HEK293 (cell line): ENCODE measurements at regions of chr10 and their contacts with region 1.

Region 1: DNA sequence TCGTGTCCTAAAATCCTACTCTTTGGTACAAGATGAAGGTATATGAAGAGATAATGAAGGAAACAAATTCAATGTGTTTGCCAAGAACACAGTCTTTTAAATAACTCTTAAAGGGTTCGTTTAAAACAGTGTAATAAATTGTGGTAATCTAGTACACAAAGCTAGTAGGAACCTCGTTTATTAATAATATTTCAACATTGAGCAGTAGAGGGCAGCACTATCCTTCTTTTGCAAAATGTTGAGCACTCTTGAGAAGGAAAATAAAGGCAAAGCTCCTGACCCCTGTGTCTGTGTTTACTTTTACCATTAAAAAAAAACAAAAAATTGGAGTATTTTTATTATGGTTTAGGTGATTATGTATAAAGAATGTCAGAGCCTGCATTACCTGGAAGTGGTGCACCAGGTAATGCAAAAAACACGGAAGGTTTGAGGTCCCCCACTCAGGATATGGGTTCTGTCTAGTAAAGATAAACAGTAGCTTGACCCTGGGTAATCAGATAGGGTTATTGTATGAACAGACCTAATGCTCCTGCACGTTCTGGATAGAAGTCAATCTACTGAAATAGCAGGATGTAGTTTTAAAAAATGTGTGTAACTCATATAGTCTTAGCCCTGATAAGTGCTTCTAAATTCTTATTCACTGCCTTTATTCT is 5.7 kb upstream of the GOT1 start:
- H3K4me3 ChIP-seq: no peak overlapping the region
- H3K27ac ChIP-seq: no peak overlapping the region
- H3K4me1 ChIP-seq: 0 out of 2 replicates have a peak, but pooled peaks cover 3% of the 10 kb centered on the region
- CTCF ChIP-seq: no peak

Region 2: GRCh38 chr10:99394256-99394655 is 41.9 kb before region 1 on chr10:
- CTCF ChIA-PET with region 1: interaction called, 14 read pairs
- POLR2A ChIA-PET with region 1: interaction called, 6 read pairs
- H3K4me3 ChIP-seq: no peak overlapping the region
- H3K27ac ChIP-seq: no peak overlapping the region
- H3K4me1 ChIP-seq: peaks cover 19% of the 10 kb centered on the region
- CTCF ChIP-seq: no peak

Region 3: GRCh38 chr10:99484603-99485581 is 48.8 kb after region 1 on chr10:
- CTCF ChIA-PET with region 1: interaction called, 27 read pairs
- POLR2A ChIA-PET with region 1: no interaction called
- H3K4me3 ChIP-seq: no peak overlapping the region
- H3K27ac ChIP-seq: no peak overlapping the region
- H3K4me1 ChIP-seq: no peaks in the 10 kb centered on the region
- CTCF ChIP-seq: no peak; the same call in 1 of the 2 replicates

Region 4: GRCh38 chr10:99560277-99561126 is 124.4 kb after region 1 on chr10:
- CTCF ChIA-PET with region 1: interaction called, 31 read pairs
- POLR2A ChIA-PET with region 1: no interaction called
- H3K4me3 ChIP-seq: no peak overlapping the region
- H3K27ac ChIP-seq: no peak overlapping the region
- H3K4me1 ChIP-seq: peaks cover 5% of the 10 kb centered on the region
- CTCF ChIP-seq: peak; percentile 56

Region 5: GRCh38 chr10:99612167-99612831 is 176.2 kb after region 1 on chr10:
- CTCF ChIA-PET with region 1: interaction called, 104 read pairs
- POLR2A ChIA-PET with region 1: interaction called, 6 read pairs
- H3K4me3 ChIP-seq: no peak overlapping the region
- H3K27ac ChIP-seq: no peak overlapping the region
- H3K4me1 ChIP-seq: 0 out of 2 replicates have a peak, but pooled peaks cover 3% of the 10 kb centered on the region
- CTCF ChIP-seq: peak; percentile 78

Region 6: GRCh38 chr10:99711129-99711719 is 275.1 kb after region 1 on chr10:
- CTCF ChIA-PET with region 1: interaction called, 13 read pairs
- POLR2A ChIA-PET with region 1: no interaction called
- H3K4me3 ChIP-seq: no peak overlapping the region
- H3K27ac ChIP-seq: no peak overlapping the region
- H3K4me1 ChIP-seq: no peaks in the 10 kb centered on the region
- CTCF ChIP-seq: no peak